Activated B cell treated with CpG ODN at 0.5 μM for 24 hours (primary cell): ENCODE measurements at regions of chr15 and their contacts with region 1.

Region 1: DNA sequence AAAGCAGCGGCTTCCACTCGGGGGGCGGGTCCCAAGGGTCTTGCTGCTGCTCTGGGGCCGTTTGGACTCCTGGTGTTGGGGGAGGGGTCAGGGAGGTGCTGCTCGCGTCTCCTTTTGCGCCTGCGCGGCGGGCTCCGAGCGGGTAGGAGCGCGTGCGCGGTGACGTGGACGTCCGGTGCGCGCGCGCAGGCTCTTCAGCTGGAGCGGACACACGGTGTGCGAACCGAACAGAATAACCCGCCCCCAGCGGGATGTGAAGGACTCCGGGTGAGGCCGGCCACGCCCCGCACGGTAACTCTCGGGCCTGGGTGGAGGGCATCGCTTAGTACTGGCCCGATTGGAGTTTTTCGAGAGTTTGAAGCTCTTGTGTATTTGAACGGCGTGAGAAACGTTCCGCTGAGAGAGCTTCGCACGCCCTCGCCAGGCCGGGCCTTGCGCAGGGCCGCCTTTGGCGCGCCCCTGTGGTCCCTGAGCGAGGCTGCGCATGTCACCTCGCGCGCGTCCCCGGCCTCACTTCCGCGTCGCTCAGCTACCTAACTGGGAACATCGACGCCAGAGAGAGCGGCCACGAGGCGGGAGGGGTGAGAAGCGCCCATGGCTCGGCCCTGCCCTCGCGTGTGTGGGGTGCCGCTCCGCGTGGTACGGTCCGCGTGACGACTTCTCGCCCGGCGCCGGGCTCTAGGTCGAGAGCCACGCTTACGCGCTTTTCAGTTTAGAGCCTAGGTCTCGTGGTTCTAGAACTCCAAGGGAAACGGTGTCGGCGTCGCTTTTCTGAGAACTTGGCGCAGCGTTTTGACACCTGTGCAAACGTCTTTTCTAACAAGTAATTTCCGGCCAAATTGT is at the start of gene MGA:
- DNase-seq: peak; percentile 92
- ATAC-seq: peak; percentile 84
- H3K4me3 Mint-ChIP-seq: peak within 1 kb of the TSS; percentile 91
- H3K27ac Mint-ChIP-seq: peak within 1 kb of the TSS; percentile 91
- H3K4me1 Mint-ChIP-seq: peaks cover 51% of the 10 kb centered on the region
- H3K27me3 Mint-ChIP-seq: peaks cover 2% of the 10 kb centered on the region
- CTCF ChIP-seq: no peak
- total RNA-seq, gene MGA: 49.9 and 58.3 TPM in 2 replicates

Region 2: GRCh38 chr15:41603941-41604911 is 56.2 kb before region 1 on chr15:
- CTCF ChIA-PET with region 1: interaction called, 4 read pairs
- POLR2A ChIA-PET with region 1: no interaction called
- intact Hi-C with region 1: loop called (anchors 10 kb)
- DNase-seq: peak; percentile 25
- ATAC-seq: peak; percentile 96
- H3K4me3 Mint-ChIP-seq: peak overlapping the region; percentile 64
- H3K27ac Mint-ChIP-seq: no peak overlapping the region
- H3K4me1 Mint-ChIP-seq: peaks cover 10% of the 10 kb centered on the region
- H3K27me3 Mint-ChIP-seq: peaks cover 26% of the 10 kb centered on the region
- CTCF ChIP-seq: peak; percentile 13

Region 3: DNA sequence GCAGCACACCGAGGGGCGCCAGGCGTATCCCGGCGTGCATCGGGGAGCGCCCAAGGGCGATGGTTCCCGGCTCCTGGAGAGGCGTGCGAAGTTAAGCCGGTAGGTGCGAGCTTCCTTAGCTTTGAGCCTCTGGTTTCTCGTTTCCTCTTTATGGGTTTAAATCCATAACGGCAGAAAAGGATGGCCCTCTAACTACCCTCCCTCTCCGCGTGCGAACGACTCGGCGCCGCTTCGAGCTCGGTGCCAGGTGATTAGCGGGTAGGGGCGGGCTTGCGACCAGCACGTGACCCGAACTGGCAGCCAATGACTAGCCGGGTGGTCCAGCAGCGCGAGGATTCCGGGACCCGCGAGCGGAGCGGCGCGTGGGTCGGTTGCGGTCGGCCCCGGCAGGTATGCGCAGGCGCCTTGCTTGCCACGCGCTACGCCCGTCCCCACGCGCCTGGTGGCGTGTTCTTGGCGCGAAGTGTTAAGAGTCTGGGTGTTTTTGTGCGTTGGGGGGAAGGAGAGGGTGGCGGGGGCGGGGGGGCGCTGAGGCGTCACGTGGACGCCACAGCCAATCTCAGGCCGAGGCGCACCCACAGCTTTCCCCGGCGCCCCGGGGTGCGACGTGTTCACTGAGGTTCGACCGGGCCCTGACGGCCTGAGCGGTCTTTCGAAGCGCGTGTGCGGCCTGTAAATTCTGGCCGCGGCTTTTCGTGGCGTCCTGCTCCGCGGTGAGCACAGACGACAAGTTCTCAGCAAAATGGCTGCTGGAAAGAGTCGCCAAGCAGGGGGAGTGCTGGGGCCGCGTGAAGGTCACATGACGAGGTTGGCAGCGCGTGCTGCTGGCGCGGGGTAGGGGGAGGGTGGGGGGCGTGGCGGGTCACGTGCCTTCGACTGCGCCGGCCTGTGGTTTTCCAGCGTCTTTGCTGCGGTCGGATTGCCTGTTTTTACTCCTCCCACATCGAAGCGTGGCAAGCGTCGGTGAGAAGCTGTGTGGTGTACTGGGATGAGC is 39.0 kb before region 1 on chr15:
- CTCF ChIA-PET with region 1: interaction called, 8 read pairs
- POLR2A ChIA-PET with region 1: interaction called, 21 read pairs
- intact Hi-C with region 1: loop called (anchors 1 kb)
- DNase-seq: peak; percentile 68
- ATAC-seq: peak; percentile 89
- H3K4me3 Mint-ChIP-seq: peak overlapping the region; percentile 81
- H3K27ac Mint-ChIP-seq: peak overlapping the region; percentile 66
- H3K4me1 Mint-ChIP-seq: peaks cover 16% of the 10 kb centered on the region
- H3K27me3 Mint-ChIP-seq: no peaks in the 10 kb centered on the region
- CTCF ChIP-seq: no peak

Region 4: GRCh38 chr15:41989259-41989933 is 328.9 kb after region 1 on chr15:
- CTCF ChIA-PET with region 1: no interaction called
- POLR2A ChIA-PET with region 1: no interaction called
- intact Hi-C with region 1: no loop called
- DNase-seq: peak; percentile 83
- ATAC-seq: peak; percentile 100
- H3K4me3 Mint-ChIP-seq: no peak overlapping the region
- H3K27ac Mint-ChIP-seq: no peak overlapping the region
- H3K4me1 Mint-ChIP-seq: no peaks in the 10 kb centered on the region
- H3K27me3 Mint-ChIP-seq: peaks cover 6% of the 10 kb centered on the region
- CTCF ChIP-seq: peak; percentile 85